Mucosa of descending colon (tissue), 3 donors: ENCODE measurements at regions of chr4 and their contacts with region 1.

Region 1: GRCh38 chr4:163554870-163555465 is 60.5 kb downstream of the TMA16 start:
- DNase-seq: no peak
- ATAC-seq: no peak
- H3K4me3 ChIP-seq: no peak overlapping the region
- H3K4me1 ChIP-seq: peaks cover 3% of the 10 kb centered on the region
- CTCF ChIP-seq: peak; percentile 56

Region 2: GRCh38 chr4:163606896-163607691 is 52.1 kb after region 1 on chr4:
- intact Hi-C with region 1: no loop called
- DNase-seq: no peak
- ATAC-seq: peak; percentile 16
- H3K4me3 ChIP-seq: no peak overlapping the region
- H3K4me1 ChIP-seq: no peaks in the 10 kb centered on the region
- CTCF ChIP-seq: no peak

Region 3: DNA sequence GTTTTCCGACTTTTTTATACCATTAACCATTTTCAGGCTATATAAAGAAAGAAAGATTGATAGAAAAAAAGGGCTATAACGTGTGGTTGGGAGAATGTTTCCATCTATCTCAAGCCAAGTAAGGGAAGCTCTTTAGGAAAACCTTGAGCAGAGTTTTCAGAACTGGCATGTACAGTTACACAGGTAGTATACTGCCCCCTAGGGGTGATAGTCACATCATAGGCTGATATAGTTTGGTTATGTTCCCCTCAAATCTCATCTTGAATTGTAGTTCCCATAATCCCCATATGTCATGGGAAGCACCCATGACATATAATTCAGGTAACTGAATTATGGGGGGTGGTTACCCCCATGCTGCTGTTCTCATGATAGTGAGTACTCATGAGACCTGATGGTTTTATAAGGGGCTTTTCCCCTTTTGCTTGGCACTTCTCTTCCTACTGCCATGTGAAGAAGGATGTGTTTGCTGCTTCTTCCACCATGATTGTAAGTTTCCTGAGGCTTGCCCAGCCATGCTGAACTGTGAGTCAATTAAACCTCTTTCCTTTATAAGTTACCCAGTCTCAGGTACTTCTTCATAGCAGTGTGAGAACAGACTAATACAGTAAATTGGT is 126.3 kb after region 1 on chr4:
- intact Hi-C with region 1: loop called in 1 of 2 experiments (anchors 5 kb)
- DNase-seq: peak in 1 of 3 donors; percentile 65
- ATAC-seq: peak; percentile 69
- H3K4me3 ChIP-seq: no peak overlapping the region
- H3K4me1 ChIP-seq: no peaks in the 10 kb centered on the region
- CTCF ChIP-seq: no peak

Region 4: DNA sequence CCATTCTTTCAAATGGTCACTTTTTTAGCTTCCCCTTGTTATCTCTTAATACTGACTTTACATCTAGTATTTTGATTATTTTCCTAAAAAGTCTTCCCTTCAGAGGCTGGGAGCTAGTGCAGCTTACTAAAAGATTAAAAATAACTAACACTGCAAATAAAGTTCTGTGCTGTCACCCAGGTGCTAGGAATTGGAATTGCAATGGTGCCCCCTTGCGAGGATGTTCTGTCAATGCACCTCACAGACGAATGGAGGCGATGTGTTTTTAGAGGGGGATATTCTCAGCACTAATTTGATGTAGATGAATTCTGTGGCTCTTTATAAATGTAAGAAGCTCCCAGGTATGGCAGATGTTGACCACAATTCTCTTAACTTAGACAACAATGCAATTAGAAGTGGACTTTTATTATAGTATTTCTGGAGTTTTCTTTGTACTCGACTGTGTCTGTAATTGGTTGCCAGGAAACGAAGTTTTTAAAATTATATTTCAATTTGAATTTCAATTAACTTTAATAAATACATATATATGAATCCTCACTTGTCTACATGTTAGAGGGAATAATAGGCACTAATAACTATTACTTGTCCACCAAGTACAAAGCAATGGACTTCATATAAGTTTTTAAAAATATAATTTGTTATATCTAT is 1177.0 kb after region 1 on chr4:
- intact Hi-C with region 1: loop called in 1 of 2 experiments (anchors 10 kb)
- DNase-seq: peak in 1 of 3 donors; percentile 28
- ATAC-seq: peak; percentile 60
- H3K4me3 ChIP-seq: no peak overlapping the region
- H3K4me1 ChIP-seq: no peaks in the 10 kb centered on the region
- CTCF ChIP-seq: peak; percentile 53